ENCODE measurements at regions of chr9 and their contacts with region 1.

Region 1: GRCh38 chr9:26744191-26744965 is 148.2 kb downstream of the CAAP1 start:
- DNase-seq: peak in 1 of 2 experiments; percentile 44
- H3K4me3 ChIP-seq: no peak overlapping the region
- H3K4me1 ChIP-seq: peaks cover 16% of the 10 kb centered on the region
- H3K27me3 ChIP-seq: no peaks in the 10 kb centered on the region

Region 2: GRCh38 chr9:26296910-26297572 is 447.3 kb before region 1 on chr9:
- in situ Hi-C with region 1: no loop called
- DNase-seq: no peak
- H3K4me3 ChIP-seq: no peak overlapping the region
- H3K4me1 ChIP-seq: no peaks in the 10 kb centered on the region
- H3K27me3 ChIP-seq: no peaks in the 10 kb centered on the region

Region 3: GRCh38 chr9:26856413-26857032 is 112.1 kb after region 1 on chr9:
- in situ Hi-C with region 1: loop called (anchors 10 kb)
- DNase-seq: peak; percentile 69 to 76
- H3K4me3 ChIP-seq: no peak overlapping the region
- H3K4me1 ChIP-seq: peaks cover 5% of the 10 kb centered on the region
- H3K27me3 ChIP-seq: no peaks in the 10 kb centered on the region

Region 4: GRCh38 chr9:27227192-27227591 is 482.8 kb after region 1 on chr9:
- in situ Hi-C with region 1: no loop called
- DNase-seq: no peak
- H3K4me3 ChIP-seq: no peak overlapping the region
- H3K4me1 ChIP-seq: no peaks in the 10 kb centered on the region
- H3K27me3 ChIP-seq: no peaks in the 10 kb centered on the region

Measured in HAP-1 (cell line).